CD8-positive, alpha-beta memory T cell (primary cell): ENCODE measurements at regions of chr19 and their contacts with region 1.

Region 1: DNA sequence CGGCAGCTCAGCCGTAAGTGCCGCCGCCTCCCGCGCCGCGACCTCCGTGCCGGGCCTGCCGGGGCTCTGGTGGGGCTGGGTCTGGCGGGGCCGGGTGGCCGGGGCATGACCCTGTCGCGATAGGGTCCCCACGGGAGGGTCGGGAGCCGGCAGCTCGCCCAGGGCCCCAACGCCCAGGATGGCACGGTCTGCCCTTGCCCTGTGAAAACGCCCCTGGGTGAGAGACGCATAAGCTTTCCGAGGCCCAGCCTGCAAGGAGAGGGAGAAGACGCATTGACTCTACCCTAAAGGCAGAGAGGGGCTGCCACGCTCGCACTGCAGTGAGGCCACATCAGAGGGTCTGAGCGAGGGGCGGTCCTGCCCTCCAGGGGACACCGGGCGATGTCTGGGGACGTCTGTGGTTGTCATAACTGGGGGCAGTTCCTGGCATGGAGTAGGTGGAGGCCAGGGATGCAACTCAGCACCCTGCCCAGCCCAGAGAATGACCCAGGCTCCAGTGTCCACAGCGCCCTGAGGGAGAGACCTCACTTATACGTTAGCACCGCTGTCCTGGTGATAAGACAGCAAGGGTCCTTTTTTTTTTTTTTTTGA is 539 bp downstream of the ZNF554 start:
- DNase-seq: no peak
- H3K4me3 ChIP-seq: peak overlapping the region; percentile 66
- H3K4me3 Mint-ChIP-seq: peak overlapping the region; percentile 82 to 92 (median 84)
- H3K27ac ChIP-seq: peak overlapping the region; percentile 57
- H3K27ac Mint-ChIP-seq: peak overlapping the region in 5 of 8 donors; percentile 17 to 83 (median 54)
- H3K4me1 ChIP-seq: no peaks in the 10 kb centered on the region
- H3K4me1 Mint-ChIP-seq: peaks cover 6 to 18% (median 7%) of the 10 kb centered on the region in 3 donors
- H3K27me3 ChIP-seq: no peaks in the 10 kb centered on the region
- H3K27me3 Mint-ChIP-seq: no peaks in the 10 kb centered on the region

Region 2: DNA sequence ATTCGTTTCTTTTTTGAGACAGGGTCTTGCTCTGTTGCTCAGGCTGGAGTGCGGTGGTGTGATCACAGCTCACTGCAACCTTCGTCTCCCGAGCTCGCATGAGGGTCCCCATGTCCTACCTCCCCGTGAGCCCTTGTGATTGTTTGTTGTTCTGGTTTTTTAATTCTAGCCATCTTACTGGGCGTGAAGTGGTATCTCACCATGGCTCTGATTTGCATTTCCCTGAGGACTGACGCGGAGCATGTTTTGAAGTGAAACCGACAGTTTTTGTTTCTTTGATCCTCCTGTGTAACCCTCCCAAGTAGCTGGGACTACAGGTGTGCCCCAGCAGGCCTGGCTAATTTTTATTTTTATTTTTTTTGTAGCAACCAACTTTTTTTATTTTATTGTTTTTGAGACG is 139.4 kb before region 1 on chr19:
- CTCF ChIA-PET with region 1: no interaction called
- POLR2A ChIA-PET with region 1: no interaction called
- DNase-seq: no peak
- H3K4me3 ChIP-seq: no peak overlapping the region
- H3K4me3 Mint-ChIP-seq: no peak overlapping the region
- H3K27ac ChIP-seq: no peak overlapping the region
- H3K27ac Mint-ChIP-seq: no peak overlapping the region
- H3K4me1 ChIP-seq: no peaks in the 10 kb centered on the region
- H3K4me1 Mint-ChIP-seq: no peaks in the 10 kb centered on the region
- H3K27me3 ChIP-seq: no peaks in the 10 kb centered on the region
- H3K27me3 Mint-ChIP-seq: peaks cover 0 to 6% of the 10 kb centered on the region in 2 donors

Region 3: DNA sequence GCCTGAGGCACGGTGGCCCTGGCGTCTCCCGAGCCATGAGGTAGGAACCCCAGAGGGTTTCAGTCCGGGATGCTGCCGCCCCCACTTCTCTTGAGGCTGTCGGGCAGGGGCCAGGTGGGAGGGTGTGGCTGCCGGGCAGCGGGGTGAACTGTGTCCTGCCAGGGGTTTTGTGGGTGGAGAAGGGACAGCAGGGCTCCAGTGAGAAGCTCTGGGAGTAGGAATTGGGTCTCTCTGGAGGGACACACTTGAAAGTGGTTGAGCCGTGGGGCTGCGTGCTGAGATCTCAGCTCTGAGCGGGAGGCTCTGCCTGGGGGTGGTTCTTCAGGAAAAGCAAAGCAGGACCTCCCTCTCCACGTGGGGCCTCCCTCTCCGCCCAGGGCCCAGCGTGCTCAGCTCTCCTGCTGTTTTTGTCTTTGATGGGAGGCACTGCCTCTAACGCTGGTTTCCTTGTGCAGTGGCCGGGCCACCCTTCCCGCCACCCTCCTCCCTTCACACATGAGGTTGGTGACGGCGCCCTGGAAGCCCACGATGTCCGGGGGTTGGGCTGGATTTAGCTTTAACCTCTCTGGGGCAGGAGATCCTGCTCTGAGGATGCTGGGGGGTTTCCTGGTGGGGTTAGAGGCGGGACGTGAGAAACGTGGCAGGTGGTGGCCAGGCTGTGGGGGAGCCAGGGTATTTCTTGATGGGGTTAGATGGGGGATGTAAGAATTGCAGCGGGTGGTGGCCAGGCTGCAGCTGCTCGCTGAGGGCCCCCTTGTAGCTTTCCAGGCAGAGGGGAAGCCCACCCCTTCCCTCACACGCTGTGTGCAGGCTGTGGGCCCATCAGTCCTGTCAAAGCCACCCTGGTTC is 15.8 kb before region 1 on chr19:
- CTCF ChIA-PET with region 1: interaction called, 11 read pairs
- POLR2A ChIA-PET with region 1: no interaction called
- DNase-seq: peak in 1 of 5 donors; percentile 41
- H3K4me3 ChIP-seq: no peak overlapping the region
- H3K4me3 Mint-ChIP-seq: no peak overlapping the region
- H3K27ac ChIP-seq: no peak overlapping the region
- H3K27ac Mint-ChIP-seq: no peak overlapping the region
- H3K4me1 ChIP-seq: no peaks in the 10 kb centered on the region
- H3K4me1 Mint-ChIP-seq: peaks cover 0 to 5% (median 0%) of the 10 kb centered on the region in 3 donors
- H3K27me3 ChIP-seq: no peaks in the 10 kb centered on the region
- H3K27me3 Mint-ChIP-seq: peaks cover 0 to 2% of the 10 kb centered on the region in 2 donors